IMR-90 (cell line): ENCODE measurements at regions of chr1 and their contacts with region 1.

Region 1: GRCh38 chr1:216750012-216750627 is 26.9 kb upstream of the ESRRG start:
- DNase-seq: peak; percentile 69
- ATAC-seq: peak; percentile 90
- H3K4me3 ChIP-seq: no peak overlapping the region
- H3K27ac ChIP-seq: no peak overlapping the region
- H3K4me1 ChIP-seq: no peaks in the 10 kb centered on the region
- H3K27me3 ChIP-seq: no peaks in the 10 kb centered on the region
- CTCF ChIP-seq: peak; percentile 83
- POLR2A ChIP-seq: no peak
- RAD21 ChIP-seq: peak; percentile 88

Region 2: DNA sequence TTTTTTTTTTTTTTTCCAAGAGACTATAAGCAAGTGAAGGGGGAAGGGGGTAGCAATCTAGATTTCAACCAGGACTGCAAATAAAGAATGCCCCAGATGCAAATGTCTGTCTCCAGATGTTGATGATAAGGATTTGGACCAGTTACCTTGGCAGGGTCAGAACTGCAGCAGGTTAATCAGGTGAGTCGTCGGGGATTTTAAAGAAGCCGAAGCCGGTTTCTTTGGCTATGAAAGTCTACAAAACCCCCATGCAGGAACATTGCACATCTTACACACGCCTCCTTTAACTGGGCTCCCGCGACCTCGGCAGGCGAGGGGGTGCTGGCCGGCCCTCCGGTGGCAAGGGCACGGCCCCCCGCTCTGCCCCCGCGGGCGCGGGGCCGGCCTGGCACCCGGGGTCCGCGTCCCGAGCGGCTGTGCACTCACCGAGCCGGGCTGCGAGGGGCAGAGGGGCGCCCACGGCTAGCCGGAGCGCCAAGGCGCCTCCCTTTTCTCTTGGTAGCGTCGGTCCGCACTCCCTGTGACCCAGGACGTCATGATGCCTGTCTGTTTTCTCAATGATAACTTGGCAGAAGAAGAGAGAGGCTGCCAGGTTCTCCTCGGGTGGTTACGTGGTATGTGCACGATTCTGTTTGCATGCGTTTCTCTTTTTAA is 339.4 kb after region 1 on chr1:
- CTCF ChIA-PET with region 1: interaction called, 3 read pairs
- POLR2A ChIA-PET with region 1: no interaction called
- dilution Hi-C with region 1: no loop called
- in situ Hi-C with region 1: no loop called
- intact Hi-C with region 1: loop called (anchors 5 kb)
- DNase-seq: peak; percentile 61
- ATAC-seq: peak; percentile 84
- H3K4me3 ChIP-seq: peak overlapping the region; percentile 30
- H3K27ac ChIP-seq: no peak overlapping the region
- H3K4me1 ChIP-seq: peaks cover 4% of the 10 kb centered on the region; the same call in 1 of the 2 replicates
- H3K27me3 ChIP-seq: no peaks in the 10 kb centered on the region
- CTCF ChIP-seq: no peak
- POLR2A ChIP-seq: no peak
- RAD21 ChIP-seq: no peak

Region 3: DNA sequence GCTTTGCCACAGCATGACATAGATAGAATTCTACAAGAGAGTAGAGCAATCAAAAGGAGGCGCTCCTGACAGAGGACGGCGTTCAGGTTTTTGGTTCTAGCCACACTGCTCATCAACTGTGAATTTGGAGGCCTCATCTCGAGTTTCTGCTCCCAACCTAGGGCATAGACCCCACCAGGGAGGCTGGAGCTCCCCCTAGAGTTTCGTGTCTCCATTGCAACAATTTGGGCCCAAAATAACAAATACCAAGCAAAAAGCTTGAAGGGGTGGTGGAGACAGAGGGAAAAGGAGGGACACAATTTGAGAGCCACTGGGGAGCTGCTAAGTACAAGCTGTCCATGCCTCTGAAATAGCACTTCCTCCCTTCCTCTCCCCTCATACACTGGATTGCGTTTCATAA is 583.8 kb after region 1 on chr1:
- CTCF ChIA-PET with region 1: interaction called, 4 read pairs
- POLR2A ChIA-PET with region 1: no interaction called
- dilution Hi-C with region 1: no loop called
- in situ Hi-C with region 1: no loop called
- intact Hi-C with region 1: loop called (anchors 2 kb)
- DNase-seq: peak; percentile 9
- ATAC-seq: peak; percentile 40; the same call in 1 of the 2 replicates
- H3K4me3 ChIP-seq: no peak overlapping the region
- H3K27ac ChIP-seq: no peak overlapping the region
- H3K4me1 ChIP-seq: peaks cover 1% of the 10 kb centered on the region; the same call in 1 of the 2 replicates
- H3K27me3 ChIP-seq: no peaks in the 10 kb centered on the region
- CTCF ChIP-seq: peak; percentile 71
- POLR2A ChIP-seq: no peak
- RAD21 ChIP-seq: peak; percentile 77

Region 4: GRCh38 chr1:217418269-217419193 is 668.4 kb after region 1 on chr1:
- CTCF ChIA-PET with region 1: no interaction called
- POLR2A ChIA-PET with region 1: no interaction called
- dilution Hi-C with region 1: no loop called
- in situ Hi-C with region 1: no loop called
- intact Hi-C with region 1: loop called (anchors 10 kb)
- DNase-seq: peak; percentile 58
- ATAC-seq: peak; percentile 85
- H3K4me3 ChIP-seq: peak overlapping the region; percentile 12; the same call in 1 of the 2 replicates
- H3K27ac ChIP-seq: peak overlapping the region; percentile 45; the same call in 1 of the 2 replicates
- H3K4me1 ChIP-seq: peaks cover 2% of the 10 kb centered on the region
- H3K27me3 ChIP-seq: no peaks in the 10 kb centered on the region
- CTCF ChIP-seq: no peak
- POLR2A ChIP-seq: no peak
- RAD21 ChIP-seq: no peak

Region 5: GRCh38 chr1:217660353-217661062 is 910.4 kb after region 1 on chr1:
- CTCF ChIA-PET with region 1: interaction called, 8 read pairs
- POLR2A ChIA-PET with region 1: no interaction called
- dilution Hi-C with region 1: no loop called
- in situ Hi-C with region 1: loop called (anchors 25 kb)
- intact Hi-C with region 1: loop called (anchors 1 kb)
- DNase-seq: peak; percentile 90
- ATAC-seq: peak; percentile 93
- H3K4me3 ChIP-seq: no peak overlapping the region
- H3K27ac ChIP-seq: peak overlapping the region; percentile 74
- H3K4me1 ChIP-seq: peaks cover 5% of the 10 kb centered on the region
- H3K27me3 ChIP-seq: no peaks in the 10 kb centered on the region
- CTCF ChIP-seq: peak; percentile 78
- POLR2A ChIP-seq: no peak
- RAD21 ChIP-seq: peak; percentile 75

Region 6: DNA sequence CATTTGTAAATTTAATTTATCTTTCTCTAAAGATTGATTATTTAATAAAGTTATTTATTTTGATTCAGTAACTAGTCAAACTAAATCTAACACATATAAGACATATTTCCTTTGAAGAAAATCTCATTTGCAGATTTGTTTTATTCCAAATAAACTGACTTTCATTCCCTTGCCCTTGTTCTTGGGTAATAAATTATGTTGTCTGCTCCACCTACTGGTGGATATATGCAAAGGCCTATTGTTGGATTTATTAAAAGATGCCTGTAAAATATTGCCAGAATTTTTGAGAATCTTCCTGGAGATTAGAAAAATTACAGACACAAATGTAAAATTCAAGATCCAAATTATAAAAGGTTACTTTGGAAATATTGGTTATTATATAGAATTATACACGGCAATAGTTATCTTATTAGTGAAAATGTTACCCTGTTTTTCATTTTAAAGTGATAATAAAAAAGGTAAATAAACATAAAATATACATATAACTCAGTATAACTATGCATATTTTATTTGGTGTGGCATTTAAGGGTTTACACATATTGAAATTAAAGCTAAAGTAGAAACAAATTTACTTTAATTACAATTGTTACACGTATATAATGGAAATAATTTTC is 997.1 kb after region 1 on chr1:
- CTCF ChIA-PET with region 1: interaction called, 3 read pairs
- POLR2A ChIA-PET with region 1: no interaction called
- dilution Hi-C with region 1: no loop called
- in situ Hi-C with region 1: no loop called
- intact Hi-C with region 1: loop called (anchors 1 kb)
- DNase-seq: peak; percentile 41
- ATAC-seq: peak; percentile 40; the same call in 1 of the 2 replicates
- H3K4me3 ChIP-seq: no peak overlapping the region
- H3K27ac ChIP-seq: no peak overlapping the region
- H3K4me1 ChIP-seq: no peaks in the 10 kb centered on the region
- H3K27me3 ChIP-seq: no peaks in the 10 kb centered on the region
- CTCF ChIP-seq: peak; percentile 77
- POLR2A ChIP-seq: no peak
- RAD21 ChIP-seq: peak; percentile 57

Region 7: GRCh38 chr1:218171285-218171893 is 1421.3 kb after region 1 on chr1:
- CTCF ChIA-PET with region 1: no interaction called
- POLR2A ChIA-PET with region 1: no interaction called
- dilution Hi-C with region 1: no loop called
- in situ Hi-C with region 1: no loop called
- intact Hi-C with region 1: loop called (anchors 5 kb)
- DNase-seq: peak; percentile 49
- ATAC-seq: peak; percentile 62
- H3K4me3 ChIP-seq: no peak overlapping the region
- H3K27ac ChIP-seq: no peak overlapping the region
- H3K4me1 ChIP-seq: no peaks in the 10 kb centered on the region
- H3K27me3 ChIP-seq: peaks cover 13% of the 10 kb centered on the region
- CTCF ChIP-seq: peak; percentile 84
- POLR2A ChIP-seq: no peak
- RAD21 ChIP-seq: peak; percentile 73